ENCODE measurements at regions of chr9 and their contacts with region 1.

Region 1: DNA sequence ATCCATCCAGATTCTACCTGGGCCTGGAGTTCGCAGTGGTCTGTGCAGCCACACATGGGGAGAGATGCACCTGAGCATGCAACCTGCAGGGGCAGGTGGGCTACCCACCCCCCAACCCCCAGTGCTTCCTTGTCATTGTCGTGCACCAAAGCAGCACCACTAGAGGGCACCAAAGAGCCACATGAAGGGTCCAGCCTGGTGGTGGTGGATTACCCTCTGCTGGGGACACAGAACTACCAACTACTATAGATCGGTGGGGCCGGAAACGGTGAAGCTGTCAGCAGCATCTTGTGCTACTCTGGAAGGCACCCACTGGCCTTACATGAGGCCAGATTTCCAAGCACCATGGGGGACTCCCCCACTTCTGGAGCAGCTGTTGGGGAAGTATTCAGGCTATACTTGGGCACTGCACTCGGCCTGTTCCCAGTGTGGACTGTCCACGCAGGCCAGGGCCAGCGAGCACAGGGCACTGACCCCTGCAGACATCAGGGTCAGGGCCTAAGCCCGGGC is 60.2 kb upstream of the TBC1D2 start:
- DNase-seq: peak; percentile 84
- H3K4me3 Mint-ChIP-seq: no peak overlapping the region
- H3K27ac Mint-ChIP-seq: no peak overlapping the region
- H3K4me1 Mint-ChIP-seq: peaks cover 6% of the 10 kb centered on the region
- H3K27me3 Mint-ChIP-seq: no peaks in the 10 kb centered on the region
- CTCF ChIP-seq: peak; percentile 93

Region 2: DNA sequence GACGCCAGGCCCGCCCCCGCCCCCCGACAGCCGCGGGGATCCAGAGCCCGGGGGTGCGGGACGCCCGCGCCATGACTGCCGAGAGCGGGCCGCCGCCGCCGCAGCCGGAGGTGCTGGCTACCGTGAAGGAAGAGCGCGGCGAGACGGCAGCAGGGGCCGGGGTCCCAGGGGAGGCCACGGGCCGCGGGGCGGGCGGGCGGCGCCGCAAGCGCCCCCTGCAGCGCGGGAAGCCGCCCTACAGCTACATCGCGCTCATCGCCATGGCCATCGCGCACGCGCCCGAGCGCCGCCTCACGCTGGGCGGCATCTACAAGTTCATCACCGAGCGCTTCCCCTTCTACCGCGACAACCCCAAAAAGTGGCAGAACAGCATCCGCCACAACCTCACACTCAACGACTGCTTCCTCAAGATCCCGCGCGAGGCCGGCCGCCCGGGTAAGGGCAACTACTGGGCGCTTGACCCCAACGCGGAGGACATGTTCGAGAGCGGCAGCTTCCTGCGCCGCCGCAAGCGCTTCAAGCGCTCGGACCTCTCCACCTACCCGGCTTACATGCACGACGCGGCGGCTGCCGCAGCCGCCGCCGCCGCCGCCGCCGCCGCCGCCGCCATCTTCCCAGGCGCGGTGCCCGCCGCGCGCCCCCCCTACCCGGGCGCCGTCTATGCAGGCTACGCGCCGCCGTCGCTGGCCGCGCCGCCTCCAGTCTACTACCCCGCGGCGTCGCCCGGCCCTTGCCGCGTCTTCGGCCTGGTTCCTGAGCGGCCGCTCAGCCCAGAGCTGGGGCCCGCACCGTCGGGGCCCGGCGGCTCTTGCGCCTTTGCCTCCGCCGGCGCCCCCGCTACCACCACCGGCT is 461.5 kb before region 1 on chr9:
- CTCF ChIA-PET with region 1: no interaction called
- POLR2A ChIA-PET with region 1: no interaction called
- intact Hi-C with region 1: no loop called
- DNase-seq: no peak
- H3K4me3 Mint-ChIP-seq: no peak overlapping the region
- H3K27ac Mint-ChIP-seq: no peak overlapping the region
- H3K4me1 Mint-ChIP-seq: no peaks in the 10 kb centered on the region
- H3K27me3 Mint-ChIP-seq: peaks cover 44% of the 10 kb centered on the region
- CTCF ChIP-seq: no peak

Region 3: GRCh38 chr9:98108531-98109031 is 207.0 kb before region 1 on chr9:
- CTCF ChIA-PET with region 1: no interaction called
- POLR2A ChIA-PET with region 1: no interaction called
- intact Hi-C with region 1: no loop called
- DNase-seq: no peak
- H3K4me3 Mint-ChIP-seq: no peak overlapping the region
- H3K27ac Mint-ChIP-seq: no peak overlapping the region
- H3K4me1 Mint-ChIP-seq: no peaks in the 10 kb centered on the region
- H3K27me3 Mint-ChIP-seq: no peaks in the 10 kb centered on the region
- CTCF ChIP-seq: no peak

Region 4: GRCh38 chr9:98326459-98327248 is 11.0 kb after region 1 on chr9:
- CTCF ChIA-PET with region 1: interaction called, 16 read pairs
- POLR2A ChIA-PET with region 1: no interaction called
- intact Hi-C with region 1: no loop called
- DNase-seq: peak; percentile 47
- H3K4me3 Mint-ChIP-seq: no peak overlapping the region
- H3K27ac Mint-ChIP-seq: no peak overlapping the region
- H3K4me1 Mint-ChIP-seq: peaks cover 25% of the 10 kb centered on the region
- H3K27me3 Mint-ChIP-seq: no peaks in the 10 kb centered on the region
- CTCF ChIP-seq: no peak

Region 5: GRCh38 chr9:98401140-98402018 is 85.8 kb after region 1 on chr9:
- CTCF ChIA-PET with region 1: no interaction called
- POLR2A ChIA-PET with region 1: no interaction called
- intact Hi-C with region 1: no loop called
- DNase-seq: no peak
- H3K4me3 Mint-ChIP-seq: no peak overlapping the region
- H3K27ac Mint-ChIP-seq: no peak overlapping the region
- H3K4me1 Mint-ChIP-seq: no peaks in the 10 kb centered on the region
- H3K27me3 Mint-ChIP-seq: peaks cover 42% of the 10 kb centered on the region
- CTCF ChIP-seq: no peak

Region 6: DNA sequence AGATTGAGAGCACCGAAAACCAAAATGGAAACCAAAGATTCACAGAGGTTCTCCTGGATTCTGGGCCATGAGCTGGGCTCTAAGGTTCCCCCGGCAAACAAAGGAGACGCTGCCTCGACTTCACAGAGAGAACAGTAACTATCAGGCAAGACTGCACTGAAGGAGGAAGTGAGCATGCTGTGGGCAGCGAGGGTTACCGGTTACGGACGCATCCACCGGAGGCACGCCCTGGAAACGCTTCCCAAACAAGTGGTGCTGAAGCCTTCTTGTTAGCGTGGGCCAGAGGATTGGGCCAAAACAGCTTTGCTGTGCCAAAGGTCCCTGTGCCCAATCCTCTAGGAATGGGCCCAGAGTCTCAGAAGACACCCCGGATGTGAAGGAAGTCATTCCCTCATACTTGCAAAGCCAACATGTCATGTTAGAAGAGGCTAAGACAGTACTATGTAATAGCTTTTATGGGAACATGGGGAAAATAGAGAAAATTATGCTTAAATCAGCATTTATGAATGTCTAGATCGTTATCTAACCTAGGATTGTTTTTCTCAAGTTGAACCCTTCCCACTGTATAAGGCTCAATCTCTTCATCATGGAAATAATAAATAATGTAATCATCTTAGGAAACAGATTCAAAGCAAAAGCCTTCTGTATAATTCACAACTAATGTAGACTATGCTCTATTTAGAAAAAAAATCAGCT is 247.8 kb after region 1 on chr9:
- CTCF ChIA-PET with region 1: no interaction called
- POLR2A ChIA-PET with region 1: no interaction called
- intact Hi-C with region 1: no loop called
- DNase-seq: no peak
- H3K4me3 Mint-ChIP-seq: no peak overlapping the region
- H3K27ac Mint-ChIP-seq: no peak overlapping the region
- H3K4me1 Mint-ChIP-seq: no peaks in the 10 kb centered on the region
- H3K27me3 Mint-ChIP-seq: peaks cover 17% of the 10 kb centered on the region
- CTCF ChIP-seq: no peak

Region 7: GRCh38 chr9:98707166-98708102 is 391.8 kb after region 1 on chr9:
- CTCF ChIA-PET with region 1: interaction called, 5 read pairs
- POLR2A ChIA-PET with region 1: no interaction called
- intact Hi-C with region 1: loop called (anchors 1 kb)
- DNase-seq: peak; percentile 30
- H3K4me3 Mint-ChIP-seq: no peak overlapping the region
- H3K27ac Mint-ChIP-seq: no peak overlapping the region
- H3K4me1 Mint-ChIP-seq: no peaks in the 10 kb centered on the region
- H3K27me3 Mint-ChIP-seq: peaks cover 55% of the 10 kb centered on the region
- CTCF ChIP-seq: peak; percentile 27

Region 8: DNA sequence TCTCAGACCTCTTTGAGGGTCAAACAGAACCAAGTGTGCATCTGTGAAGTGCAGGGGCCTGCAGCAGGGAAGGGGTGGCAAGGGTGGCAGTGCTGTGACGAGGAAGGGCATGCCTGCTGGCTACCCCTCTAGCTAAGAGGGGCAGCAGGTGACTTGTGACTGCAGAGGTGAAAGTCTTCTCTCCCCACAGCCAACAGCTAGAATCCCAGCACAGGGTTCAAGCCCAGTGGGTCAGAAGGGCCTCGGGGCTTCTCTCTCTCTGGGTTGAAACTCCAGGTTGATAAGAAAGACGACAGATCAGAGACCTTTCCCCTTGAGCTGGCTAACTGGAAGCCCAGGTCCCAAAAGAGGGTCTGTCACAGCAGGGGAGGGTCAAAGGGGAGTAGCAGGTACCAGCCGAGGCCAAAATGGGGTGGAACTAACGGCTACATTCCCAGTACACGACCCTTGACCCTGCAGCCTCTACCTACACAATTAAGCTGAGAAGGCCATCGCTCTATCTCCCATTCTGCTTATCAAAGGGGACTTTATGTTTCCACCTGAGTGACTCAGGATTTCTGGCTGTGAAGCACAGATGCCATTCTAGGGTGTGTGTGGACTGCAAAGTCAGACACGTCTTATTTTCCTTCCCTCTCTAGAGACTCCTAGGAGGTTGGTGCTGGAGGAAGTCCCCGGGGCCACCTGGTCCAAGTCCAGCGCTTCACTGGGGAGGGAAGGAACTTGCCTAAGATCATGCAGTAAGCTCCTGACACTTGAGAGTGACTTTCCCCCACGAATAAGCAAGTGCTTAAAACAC is 466.2 kb after region 1 on chr9:
- CTCF ChIA-PET with region 1: interaction called, 103 read pairs
- POLR2A ChIA-PET with region 1: interaction called, 3 read pairs
- intact Hi-C with region 1: loop called (anchors 1 kb)
- DNase-seq: peak; percentile 60
- H3K4me3 Mint-ChIP-seq: peak overlapping the region; percentile 36
- H3K27ac Mint-ChIP-seq: peak overlapping the region; percentile 89
- H3K4me1 Mint-ChIP-seq: peaks cover 14% of the 10 kb centered on the region
- H3K27me3 Mint-ChIP-seq: no peaks in the 10 kb centered on the region
- CTCF ChIP-seq: no peak

Region 9: DNA sequence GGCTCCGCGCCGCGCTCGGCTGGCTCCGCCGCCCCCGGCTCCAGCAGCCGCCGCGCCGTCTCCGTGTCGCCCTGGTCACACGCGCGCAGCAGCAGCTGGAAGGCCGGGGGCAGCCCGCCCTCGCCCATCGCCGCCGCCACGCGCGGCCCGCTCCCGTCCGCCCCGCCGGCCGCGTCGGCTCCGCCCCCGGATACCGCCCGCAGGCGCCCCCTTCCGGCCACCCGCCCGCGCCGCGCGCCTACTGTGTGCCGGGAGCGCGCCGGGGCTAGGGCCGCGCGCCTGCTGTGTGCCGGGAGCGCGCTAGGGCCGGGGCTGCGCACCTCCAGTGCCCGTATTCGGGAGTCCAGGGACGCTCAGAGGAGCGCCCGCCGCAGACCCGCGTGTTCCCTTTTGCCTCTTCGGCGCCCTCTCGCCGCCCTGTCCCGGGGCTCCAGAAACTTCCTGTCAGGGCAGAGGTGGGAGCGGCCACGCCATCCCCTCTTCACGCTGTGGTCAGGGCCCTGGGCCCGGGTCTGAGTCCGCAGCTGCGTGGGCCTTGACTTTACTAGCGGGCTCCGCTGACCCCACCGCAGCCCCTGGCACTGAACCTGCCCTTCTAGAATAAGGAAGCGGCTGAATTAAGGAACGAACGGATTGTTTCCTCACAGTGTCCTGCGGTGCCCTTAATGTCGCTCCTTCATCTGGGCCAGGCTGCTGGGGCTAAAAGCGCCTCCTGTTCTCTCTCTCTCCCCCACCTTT is 480.9 kb after region 1 on chr9 and contains the start of gene ANKS6:
- CTCF ChIA-PET with region 1: interaction called, 88 read pairs
- POLR2A ChIA-PET with region 1: no interaction called
- intact Hi-C with region 1: loop called (anchors 1 kb)
- DNase-seq: peak; percentile 64
- H3K4me3 Mint-ChIP-seq: peak within 1 kb of the TSS; percentile 60
- H3K27ac Mint-ChIP-seq: no peak within 1 kb of the TSS
- H3K4me1 Mint-ChIP-seq: peaks cover 26% of the 10 kb centered on the region
- H3K27me3 Mint-ChIP-seq: no peaks in the 10 kb centered on the region
- CTCF ChIP-seq: peak; percentile 54
- total RNA-seq, gene ANKS6: 21.2 and 21.8 TPM in 2 replicates

Measured in MCF 10A (cell line).